ENCODE measurements at regions of chr5 and their contacts with region 1.

Region 1: DNA sequence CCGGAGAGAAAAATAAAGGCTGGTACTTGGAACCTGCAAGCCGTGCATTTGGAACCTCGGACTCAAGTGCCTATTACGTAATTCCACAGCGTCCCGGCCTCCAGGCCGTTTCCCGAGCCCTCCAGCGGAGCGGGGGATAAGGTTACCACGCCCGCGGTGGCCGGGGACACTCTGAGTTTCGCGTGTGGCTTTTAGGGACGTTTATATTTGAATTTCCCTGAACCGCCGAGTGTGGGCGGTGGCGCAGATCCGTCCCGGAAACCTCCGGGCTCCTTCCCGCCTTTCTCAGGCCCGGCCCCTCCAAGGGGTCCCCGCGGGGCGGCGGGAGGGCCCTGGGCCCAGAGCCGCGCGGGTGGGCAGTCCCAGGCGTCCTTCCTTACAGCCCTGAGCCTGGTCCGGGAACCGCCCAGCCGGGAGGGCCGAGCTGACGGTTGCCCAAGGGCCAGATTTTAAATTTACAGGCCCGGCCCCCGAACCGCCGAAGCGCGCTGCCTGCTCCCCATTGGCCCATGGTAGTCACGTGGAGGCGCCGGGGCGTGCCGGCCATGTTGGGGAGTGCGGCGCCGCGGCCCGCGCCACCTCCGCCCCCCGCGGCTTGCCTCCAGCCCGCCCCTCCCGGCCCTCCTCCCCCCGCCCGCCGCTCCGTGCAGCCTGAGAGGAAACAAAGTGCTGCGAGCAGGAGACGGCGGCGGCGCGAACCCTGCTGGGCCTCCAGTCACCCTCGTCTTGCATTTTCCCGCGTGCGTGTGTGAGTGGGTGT is at the start of gene LMNB1:
- DNase-seq: peak; percentile 96
- ATAC-seq: peak; percentile 75
- H3K4me3 Mint-ChIP-seq: peak within 1 kb of the TSS; percentile 95
- H3K27ac Mint-ChIP-seq: peak within 1 kb of the TSS; percentile 97
- H3K4me1 Mint-ChIP-seq: peaks cover 23% of the 10 kb centered on the region
- H3K27me3 Mint-ChIP-seq: no peaks in the 10 kb centered on the region
- CTCF ChIP-seq: no peak
- total RNA-seq, gene LMNB1: 198 TPM

Region 2: GRCh38 chr5:126656396-126657007 is 120.2 kb before region 1 on chr5:
- CTCF ChIA-PET with region 1: interaction called, 13 read pairs
- POLR2A ChIA-PET with region 1: interaction called, 3 read pairs
- intact Hi-C with region 1: no loop called
- DNase-seq: peak; percentile 41
- ATAC-seq: no peak
- H3K4me3 Mint-ChIP-seq: no peak overlapping the region
- H3K27ac Mint-ChIP-seq: no peak overlapping the region
- H3K4me1 Mint-ChIP-seq: no peaks in the 10 kb centered on the region
- H3K27me3 Mint-ChIP-seq: no peaks in the 10 kb centered on the region
- CTCF ChIP-seq: peak; percentile 85

Region 3: DNA sequence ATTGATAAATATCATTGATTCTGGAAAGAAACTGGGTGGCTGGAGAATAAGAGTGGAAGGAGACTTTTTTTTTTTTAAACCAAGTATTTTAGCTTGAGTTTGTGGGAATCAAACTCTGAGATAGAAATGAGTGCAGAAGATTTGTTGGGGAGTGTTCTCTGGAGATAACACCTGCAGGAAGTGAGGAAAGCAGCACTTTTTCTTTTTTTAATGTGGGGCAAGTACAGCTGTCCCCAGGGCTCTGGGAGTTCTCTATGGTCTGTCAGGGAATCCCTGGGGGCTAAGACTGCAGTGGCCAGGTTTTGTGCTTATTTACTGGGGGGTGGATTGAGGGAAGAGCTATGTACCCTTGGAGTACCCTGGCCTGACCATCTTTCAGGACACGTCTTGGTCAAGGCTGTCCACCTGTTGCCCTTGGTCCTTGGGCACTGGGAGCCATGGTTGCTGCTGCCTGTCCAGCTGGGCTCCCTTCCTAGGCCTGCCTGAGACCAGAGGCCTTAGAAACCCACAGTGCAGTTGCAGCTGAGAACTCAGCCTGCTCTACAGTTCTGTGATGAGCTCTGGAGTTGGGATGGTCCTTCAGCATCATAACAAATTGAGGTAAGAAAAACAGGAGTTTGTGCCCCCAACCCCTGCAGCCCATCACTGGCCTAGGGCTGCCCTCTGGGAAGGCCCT is 90.1 kb before region 1 on chr5:
- CTCF ChIA-PET with region 1: interaction called, 277 read pairs
- POLR2A ChIA-PET with region 1: interaction called, 69 read pairs
- intact Hi-C with region 1: no loop called
- DNase-seq: no peak
- ATAC-seq: no peak
- H3K4me3 Mint-ChIP-seq: no peak overlapping the region
- H3K27ac Mint-ChIP-seq: no peak overlapping the region
- H3K4me1 Mint-ChIP-seq: peaks cover 24% of the 10 kb centered on the region
- H3K27me3 Mint-ChIP-seq: no peaks in the 10 kb centered on the region
- CTCF ChIP-seq: no peak

Region 4: GRCh38 chr5:126753227-126753626 is 23.4 kb before region 1 on chr5:
- CTCF ChIA-PET with region 1: interaction called, 12 read pairs
- POLR2A ChIA-PET with region 1: interaction called, 179 read pairs
- intact Hi-C with region 1: loop called (anchors 5 kb)
- DNase-seq: no peak
- ATAC-seq: no peak
- H3K4me3 Mint-ChIP-seq: no peak overlapping the region
- H3K27ac Mint-ChIP-seq: no peak overlapping the region
- H3K4me1 Mint-ChIP-seq: peaks cover 20% of the 10 kb centered on the region
- H3K27me3 Mint-ChIP-seq: no peaks in the 10 kb centered on the region
- CTCF ChIP-seq: no peak

Region 5: GRCh38 chr5:126801992-126802294 is 25.3 kb after region 1 on chr5:
- CTCF ChIA-PET with region 1: interaction called, 10 read pairs
- POLR2A ChIA-PET with region 1: interaction called, 9 read pairs
- intact Hi-C with region 1: no loop called
- DNase-seq: no peak
- ATAC-seq: no peak
- H3K4me3 Mint-ChIP-seq: no peak overlapping the region
- H3K27ac Mint-ChIP-seq: no peak overlapping the region
- H3K4me1 Mint-ChIP-seq: peaks cover 41% of the 10 kb centered on the region
- H3K27me3 Mint-ChIP-seq: no peaks in the 10 kb centered on the region
- CTCF ChIP-seq: no peak

Region 6: GRCh38 chr5:127030259-127031146 is 253.8 kb after region 1 on chr5 and contains the start of gene MARCHF3:
- CTCF ChIA-PET with region 1: no interaction called
- POLR2A ChIA-PET with region 1: interaction called, 14 read pairs
- intact Hi-C with region 1: no loop called
- DNase-seq: peak; percentile 94
- ATAC-seq: peak; percentile 98
- H3K4me3 Mint-ChIP-seq: peak within 1 kb of the TSS; percentile 87
- H3K27ac Mint-ChIP-seq: peak within 1 kb of the TSS; percentile 70
- H3K4me1 Mint-ChIP-seq: peaks cover 17% of the 10 kb centered on the region
- H3K27me3 Mint-ChIP-seq: peaks cover 7% of the 10 kb centered on the region
- CTCF ChIP-seq: peak; percentile 28
- total RNA-seq, gene MARCHF3: 6.1 TPM